Psoas muscle (tissue), 8 donors: ENCODE measurements at regions of chr14 and their contacts with region 1.

Region 1: GRCh38 chr14:103078093-103078749 is 5.8 kb upstream of the LBHD2 start:
- DNase-seq: peak; percentile 74 to 87
- ATAC-seq: peak; percentile 61 to 71 (median 68)
- H3K4me3 ChIP-seq: no peak overlapping the region
- H3K27ac ChIP-seq: no peak overlapping the region
- H3K4me1 ChIP-seq: no peaks in the 10 kb centered on the region
- H3K27me3 ChIP-seq: peaks cover 0 to 31% (median 2%) of the 10 kb centered on the region in 3 donors
- CTCF ChIP-seq: peak; percentile 68

Region 2: GRCh38 chr14:102694530-102695166 is 383.6 kb before region 1 on chr14:
- intact Hi-C with region 1: loop called in 1 of 2 experiments (anchors 10 kb)
- DNase-seq: no peak
- ATAC-seq: peak; percentile 60 to 82 (median 76)
- H3K4me3 ChIP-seq: no peak overlapping the region
- H3K27ac ChIP-seq: no peak overlapping the region
- H3K4me1 ChIP-seq: peaks cover 21% of the 10 kb centered on the region
- H3K27me3 ChIP-seq: no peaks in the 10 kb centered on the region
- CTCF ChIP-seq: peak; percentile 74

Region 3: DNA sequence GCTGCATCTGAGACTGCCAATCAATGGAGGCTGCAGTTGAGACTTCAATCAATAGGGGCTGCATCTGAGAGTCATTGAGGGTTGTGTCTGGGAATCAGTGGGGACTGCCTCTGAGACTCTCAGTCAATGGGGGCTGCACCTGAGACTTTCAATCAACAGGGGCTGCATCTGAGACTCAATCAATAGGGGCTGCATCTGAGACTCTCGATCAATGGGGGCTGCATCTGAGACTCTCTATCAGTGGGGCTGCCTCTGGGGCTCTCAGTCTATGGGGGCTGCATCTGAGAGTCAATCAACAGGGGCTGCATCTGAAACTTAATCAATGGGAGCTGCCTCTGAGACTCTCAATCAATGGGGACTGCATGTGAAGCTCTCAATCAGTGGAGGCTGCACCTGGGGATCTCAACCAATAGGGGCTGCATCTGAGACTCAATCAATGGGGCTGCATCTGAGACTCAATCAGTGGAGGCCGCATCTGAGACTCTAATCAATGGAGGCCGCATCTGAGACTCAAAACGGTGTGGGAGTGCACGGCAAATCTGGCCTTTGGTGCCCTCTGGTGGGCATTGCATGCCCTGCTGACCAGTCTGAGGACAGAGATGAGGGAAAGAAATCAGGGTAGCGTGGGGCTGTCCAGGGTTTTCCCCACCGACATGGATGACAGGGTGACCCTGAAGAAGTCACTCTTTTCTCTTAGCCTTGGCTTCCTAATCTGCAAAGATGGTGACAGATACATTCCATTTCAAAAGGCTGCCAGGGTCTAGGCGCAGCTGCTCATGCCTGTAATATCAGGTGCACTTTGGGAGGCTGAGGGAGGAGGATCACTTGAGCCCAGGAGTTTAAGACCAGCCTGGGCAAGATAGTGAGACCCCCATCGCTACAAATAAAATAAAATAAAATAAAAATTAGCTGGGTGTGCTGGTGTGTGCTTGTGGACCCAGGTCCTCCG is 214.5 kb after region 1 on chr14:
- intact Hi-C with region 1: loop called in 1 of 2 experiments (anchors 2 kb)
- DNase-seq: peak; percentile 74 to 88
- ATAC-seq: peak; percentile 92 to 97 (median 95)
- H3K4me3 ChIP-seq: no peak overlapping the region
- H3K27ac ChIP-seq: no peak overlapping the region
- H3K4me1 ChIP-seq: no peaks in the 10 kb centered on the region
- H3K27me3 ChIP-seq: no peaks in the 10 kb centered on the region
- CTCF ChIP-seq: peak; percentile 90